ENCODE measurements at regions of chr5 and their contacts with region 1.

Region 1: DNA sequence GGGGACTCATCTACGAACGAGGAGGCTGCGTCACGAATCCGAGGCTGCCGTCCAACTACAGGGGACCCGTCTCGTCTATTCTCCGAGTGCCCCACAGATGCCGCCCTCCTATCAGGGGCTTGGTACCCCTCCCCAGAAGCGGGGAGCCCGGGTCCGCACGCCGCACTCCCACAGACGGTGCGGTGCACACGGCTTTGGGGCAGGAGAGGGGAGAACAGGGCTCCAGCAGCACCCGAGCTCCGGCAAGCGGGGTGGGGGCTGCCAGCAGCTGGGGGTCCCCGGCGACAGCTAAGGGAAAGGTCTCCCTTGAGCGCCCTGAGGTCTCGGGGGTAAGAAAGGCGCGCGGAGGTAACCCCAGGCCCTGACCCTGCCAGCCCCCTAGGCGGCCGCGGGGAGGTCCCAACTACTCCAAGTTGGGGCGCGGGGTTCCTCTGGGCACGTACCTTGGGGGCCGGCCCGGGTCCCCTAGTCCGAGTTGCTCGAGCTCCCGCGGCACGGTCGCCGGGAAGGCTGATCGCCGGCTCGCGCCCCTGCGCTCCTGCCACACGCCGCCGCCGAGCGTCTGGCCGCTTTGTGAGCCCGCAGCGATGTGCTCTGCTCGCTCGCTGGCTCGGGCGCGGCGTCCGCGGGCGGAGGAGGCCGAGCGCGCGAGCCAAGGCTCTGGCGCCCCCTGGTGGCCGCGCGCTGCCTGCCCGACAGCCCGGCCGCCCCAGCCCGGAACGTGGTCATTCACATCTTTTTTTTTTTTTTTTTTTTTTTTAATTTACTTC is at the start of gene SPOCK1:
- DNase-seq: peak; percentile 47 to 75
- ATAC-seq: peak; percentile 87 to 95 (median 94)
- H3K4me3 ChIP-seq: peak within 1 kb of the TSS; percentile 26 to 79 (median 56)
- H3K27ac ChIP-seq: peak within 1 kb of the TSS in 4 of 10 donors; percentile 50 to 80 (median 56)
- H3K4me1 ChIP-seq: peaks cover 0 to 6% (median 5%) of the 10 kb centered on the region in 9 donors
- H3K27me3 ChIP-seq: peaks cover 0 to 39% (median 15%) of the 10 kb centered on the region in 7 donors
- CTCF ChIP-seq: peak; percentile 63 to 90 (median 78)
- total RNA-seq, gene SPOCK1: 21.6 to 70.3 (median 35.3) TPM

Region 2: GRCh38 chr5:137310051-137310730 is 188.7 kb before region 1 on chr5:
- intact Hi-C with region 1: loop called in 1 of 10 experiments (anchors 5 kb)
- DNase-seq: no peak
- ATAC-seq: peak in 2 of 8 donors; percentile 9 to 36
- H3K4me3 ChIP-seq: no peak overlapping the region
- H3K27ac ChIP-seq: peak overlapping the region in 1 of 10 donors; percentile 10
- H3K4me1 ChIP-seq: peaks cover 0 to 30% (median 10%) of the 10 kb centered on the region in 9 donors
- H3K27me3 ChIP-seq: no peaks in the 10 kb centered on the region
- CTCF ChIP-seq: no peak

Region 3: DNA sequence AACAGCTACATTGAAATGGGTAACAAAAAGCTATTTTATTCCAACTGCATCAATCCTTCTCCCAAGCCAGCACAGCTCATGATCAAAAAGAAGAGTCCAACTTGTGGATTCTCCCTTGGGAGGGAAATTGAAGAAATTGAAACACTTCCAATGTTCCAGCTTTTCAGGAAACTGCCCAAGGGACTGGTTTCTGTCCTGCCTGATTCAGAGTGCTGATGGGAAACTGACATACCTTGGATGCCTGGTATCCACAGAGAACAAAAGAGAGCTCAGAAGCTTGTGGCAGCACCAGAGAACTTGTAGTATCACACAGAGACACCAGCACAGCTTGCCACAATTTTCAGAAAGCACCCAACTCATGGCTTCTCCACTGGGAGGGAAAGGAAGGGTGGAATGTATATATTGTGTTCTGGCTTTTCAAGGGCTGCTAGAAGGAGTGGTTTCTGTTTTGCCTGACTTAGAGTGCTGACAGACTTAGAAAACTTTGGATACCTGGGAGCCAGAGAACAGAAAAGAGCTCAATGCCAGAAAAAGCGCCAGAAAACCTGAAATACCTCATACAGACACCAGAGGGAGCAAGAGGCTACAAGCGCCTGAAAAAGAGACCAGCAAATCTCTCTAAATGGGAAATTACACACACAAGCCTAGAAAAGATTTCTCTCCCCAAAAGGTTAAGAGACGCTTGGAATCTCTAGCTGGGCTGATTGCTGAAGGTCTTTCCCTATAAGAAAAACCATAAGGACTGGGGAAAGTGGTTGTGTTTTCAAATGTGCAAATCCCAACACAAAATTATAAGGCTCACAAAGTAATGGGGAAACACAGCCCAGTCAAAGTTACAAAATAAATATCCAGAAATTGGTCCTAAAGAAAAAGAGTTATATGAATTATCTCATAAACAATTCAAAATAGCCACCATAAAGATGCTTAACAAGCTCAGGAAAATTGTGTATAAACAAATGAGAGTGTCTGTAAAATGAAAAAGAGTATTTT is 178.6 kb before region 1 on chr5:
- intact Hi-C with region 1: loop called in 9 of 10 experiments (anchors 1 to 2 kb)
- DNase-seq: peak in 1 of 2 donors; percentile 26
- ATAC-seq: peak in 7 of 8 donors; percentile 28 to 59 (median 49)
- H3K4me3 ChIP-seq: no peak overlapping the region
- H3K27ac ChIP-seq: no peak overlapping the region
- H3K4me1 ChIP-seq: peaks cover 0 to 23% (median 11%) of the 10 kb centered on the region in 9 donors
- H3K27me3 ChIP-seq: peaks cover 0 to 8% (median 0%) of the 10 kb centered on the region in 7 donors
- CTCF ChIP-seq: peak; percentile 58 to 86 (median 83)

Region 4: GRCh38 chr5:137344723-137345322 is 154.1 kb before region 1 on chr5:
- intact Hi-C with region 1: loop called in 2 of 10 experiments (anchors 10 kb)
- DNase-seq: peak in 1 of 2 donors; percentile 17
- ATAC-seq: peak in 2 of 8 donors; percentile 20 to 22
- H3K4me3 ChIP-seq: no peak overlapping the region
- H3K27ac ChIP-seq: no peak overlapping the region
- H3K4me1 ChIP-seq: peaks cover 0 to 31% (median 12%) of the 10 kb centered on the region in 9 donors
- H3K27me3 ChIP-seq: no peaks in the 10 kb centered on the region
- CTCF ChIP-seq: peak in 8 of 9 donors; percentile 52 to 73 (median 61)

Measured in heart right ventricle (tissue), 16 donors.